H1 (cell line): ENCODE measurements at regions of chr17 and their contacts with region 1.

Region 1: GRCh38 chr17:32349854-32350665 is at the start of gene ZNF207:
- DNase-seq: peak; percentile 88 to 92
- H3K4me3 ChIP-seq: peak within 1 kb of the TSS; percentile 85 to 100 (median 95)
- H3K27ac ChIP-seq: peak within 1 kb of the TSS; percentile 97
- H3K4me1 ChIP-seq: no peaks in the 10 kb centered on the region; a peak in 1 of 7 replicates
- H3K27me3 ChIP-seq: no peaks in the 10 kb centered on the region
- CTCF ChIP-seq: no peak; a peak in 1 of 4 replicates
- EP300 ChIP-seq: no peak
- POLR2A ChIP-seq: peak; percentile 94 to 97
- RAD21 ChIP-seq: no peak
- total RNA-seq, gene ZNF207: 254 and 268 TPM in 2 replicates

Region 2: GRCh38 chr17:32240750-32241149 is 109.3 kb before region 1 on chr17:
- CTCF ChIA-PET with region 1: no interaction called
- POLR2A ChIA-PET with region 1: no interaction called
- DNase-seq: no peak
- H3K4me3 ChIP-seq: no peak overlapping the region
- H3K27ac ChIP-seq: no peak overlapping the region
- H3K4me1 ChIP-seq: peaks cover 0 to 8% (median 2%) of the 10 kb centered on the region in 4 experiments; a peak in 5 of 7 replicates
- H3K27me3 ChIP-seq: no peaks in the 10 kb centered on the region
- CTCF ChIP-seq: peak in 2 of 3 experiments; percentile 16 to 30; a peak in 2 of 4 replicates
- EP300 ChIP-seq: no peak
- POLR2A ChIP-seq: no peak
- RAD21 ChIP-seq: peak; percentile 32 to 58; a peak in 3 of 4 replicates

Region 3: GRCh38 chr17:32361270-32361669 is 11.2 kb after region 1 on chr17:
- CTCF ChIA-PET with region 1: interaction called, 3 read pairs
- POLR2A ChIA-PET with region 1: interaction called, 65 read pairs
- DNase-seq: no peak
- H3K4me3 ChIP-seq: no peak overlapping the region
- H3K27ac ChIP-seq: no peak overlapping the region
- H3K4me1 ChIP-seq: no peaks in the 10 kb centered on the region
- H3K27me3 ChIP-seq: no peaks in the 10 kb centered on the region
- CTCF ChIP-seq: no peak
- EP300 ChIP-seq: no peak
- POLR2A ChIP-seq: no peak
- RAD21 ChIP-seq: no peak

Region 4: DNA sequence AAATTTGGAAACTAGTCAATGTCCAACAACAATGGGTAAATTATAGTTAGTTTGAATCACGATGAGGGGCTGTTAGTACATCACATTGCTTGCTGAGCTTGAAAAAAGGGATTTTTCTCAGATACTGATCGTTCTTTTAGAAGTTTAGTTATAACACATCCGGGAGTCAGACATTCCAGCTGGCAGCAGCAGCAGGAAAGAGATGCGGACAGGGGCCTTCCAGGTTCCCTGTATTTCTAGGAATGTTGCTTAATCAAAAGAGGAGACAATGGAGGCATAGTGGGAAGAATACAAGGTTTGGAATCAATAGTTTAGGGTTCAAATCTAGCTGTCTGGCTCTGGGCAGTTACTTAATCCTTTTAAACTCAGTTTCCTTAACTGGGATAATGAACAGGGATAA is 164.5 kb after region 1 on chr17:
- CTCF ChIA-PET with region 1: no interaction called
- POLR2A ChIA-PET with region 1: no interaction called
- DNase-seq: no peak
- H3K4me3 ChIP-seq: no peak overlapping the region
- H3K27ac ChIP-seq: no peak overlapping the region
- H3K4me1 ChIP-seq: peaks cover 11 to 24% (median 13%) of the 10 kb centered on the region in 4 experiments; a peak in 6 of 7 replicates
- H3K27me3 ChIP-seq: peaks cover 0 to 1% (median 0%) of the 10 kb centered on the region in 4 experiments; a peak in 3 of 7 replicates
- CTCF ChIP-seq: no peak
- EP300 ChIP-seq: no peak
- POLR2A ChIP-seq: no peak
- RAD21 ChIP-seq: no peak